ENCODE measurements at regions of chr1 and their contacts with region 1.

Region 1: DNA sequence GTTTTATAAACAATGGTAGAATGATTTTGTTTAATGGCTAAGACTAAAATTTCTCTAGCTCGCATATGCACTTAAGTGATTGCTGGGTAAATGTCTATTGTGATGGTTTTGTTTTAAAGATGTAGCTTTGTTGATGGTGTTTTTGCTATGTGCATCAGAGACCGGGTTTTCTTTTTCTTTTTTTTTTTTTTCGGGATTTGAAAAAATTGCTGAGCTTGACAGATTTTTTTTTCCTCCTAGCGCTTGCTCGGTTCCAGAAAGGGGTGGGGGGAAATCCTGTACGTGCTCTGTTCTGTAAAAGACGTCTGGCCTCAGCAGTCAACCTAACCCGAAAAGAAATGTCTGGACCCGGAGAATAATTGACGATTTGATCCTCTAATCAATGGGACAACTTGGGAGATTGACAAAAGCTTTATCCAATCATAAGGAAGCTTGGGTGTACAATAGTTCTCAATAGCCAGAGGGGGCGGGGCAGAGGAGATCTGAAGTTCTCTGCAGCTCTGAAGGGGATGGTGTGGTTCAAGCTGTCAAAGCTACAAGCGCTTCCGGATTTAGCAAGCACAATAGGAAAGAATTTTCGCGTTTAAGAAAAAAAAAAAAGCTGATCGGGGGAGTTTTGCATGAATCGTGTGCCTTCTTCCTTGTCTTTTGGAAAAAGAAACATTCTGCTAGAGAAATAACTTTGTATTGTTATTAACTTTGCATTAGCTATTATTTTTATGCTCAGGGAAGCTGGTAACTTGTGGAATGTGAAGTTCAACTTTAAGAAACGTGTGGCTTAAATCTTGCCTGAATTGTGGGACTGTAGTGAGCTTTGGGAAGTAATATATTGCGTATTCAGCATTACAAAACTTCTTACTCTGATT is 4.5 kb upstream of the NFIA start:
- DNase-seq: peak; percentile 100
- H3K4me3 Mint-ChIP-seq: peak overlapping the region; percentile 94
- H3K27ac Mint-ChIP-seq: peak overlapping the region; percentile 96
- H3K4me1 Mint-ChIP-seq: peaks cover 42% of the 10 kb centered on the region
- H3K27me3 Mint-ChIP-seq: no peaks in the 10 kb centered on the region
- CTCF ChIP-seq: no peak

Region 2: DNA sequence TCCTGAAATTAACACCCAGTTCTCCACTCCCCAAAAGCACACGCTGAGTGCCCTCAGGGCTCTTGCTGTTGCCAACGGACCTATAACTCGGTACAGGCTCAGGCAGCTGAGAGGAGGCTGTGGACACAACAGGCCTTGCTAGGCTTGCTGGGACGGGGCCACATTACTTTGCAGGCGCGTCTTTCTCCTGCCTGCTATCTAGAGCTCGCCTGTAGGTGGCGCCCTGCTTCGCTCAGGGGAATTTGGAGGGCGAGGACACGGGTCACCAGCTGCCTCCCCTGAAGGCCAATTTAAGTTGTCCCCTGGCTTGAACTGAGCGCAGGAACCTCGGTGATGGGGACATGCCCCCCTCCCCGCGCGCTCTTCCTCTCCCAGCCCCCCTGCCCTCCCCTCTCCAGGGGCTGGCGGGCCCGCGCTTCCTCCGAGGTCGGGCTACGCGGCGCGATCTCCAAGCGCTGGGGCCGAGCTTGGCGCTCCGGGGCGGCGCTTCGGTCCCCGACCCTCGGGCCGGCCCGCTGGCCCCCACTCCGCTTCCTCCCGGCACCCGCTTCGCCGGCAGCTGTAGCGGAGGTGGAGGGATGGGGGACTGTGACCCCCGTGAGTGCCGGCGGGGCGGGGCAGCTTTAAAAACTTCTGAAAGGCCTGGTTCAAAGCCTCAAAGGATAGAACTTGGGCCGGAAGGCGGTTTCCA is 27.9 kb before region 1 on chr1:
- CTCF ChIA-PET with region 1: interaction called, 77 read pairs
- POLR2A ChIA-PET with region 1: interaction called, 369 read pairs
- intact Hi-C with region 1: no loop called
- DNase-seq: peak; percentile 90
- H3K4me3 Mint-ChIP-seq: peak overlapping the region; percentile 76
- H3K27ac Mint-ChIP-seq: peak overlapping the region; percentile 19
- H3K4me1 Mint-ChIP-seq: peaks cover 20% of the 10 kb centered on the region
- H3K27me3 Mint-ChIP-seq: no peaks in the 10 kb centered on the region
- CTCF ChIP-seq: peak; percentile 93

Region 3: GRCh38 chr1:61097317-61097716 is 19.4 kb after region 1 on chr1:
- CTCF ChIA-PET with region 1: interaction called, 5 read pairs
- POLR2A ChIA-PET with region 1: interaction called, 61 read pairs
- intact Hi-C with region 1: no loop called
- DNase-seq: peak; percentile 55
- H3K4me3 Mint-ChIP-seq: no peak overlapping the region
- H3K27ac Mint-ChIP-seq: no peak overlapping the region
- H3K4me1 Mint-ChIP-seq: peaks cover 55% of the 10 kb centered on the region
- H3K27me3 Mint-ChIP-seq: no peaks in the 10 kb centered on the region
- CTCF ChIP-seq: no peak

Region 4: DNA sequence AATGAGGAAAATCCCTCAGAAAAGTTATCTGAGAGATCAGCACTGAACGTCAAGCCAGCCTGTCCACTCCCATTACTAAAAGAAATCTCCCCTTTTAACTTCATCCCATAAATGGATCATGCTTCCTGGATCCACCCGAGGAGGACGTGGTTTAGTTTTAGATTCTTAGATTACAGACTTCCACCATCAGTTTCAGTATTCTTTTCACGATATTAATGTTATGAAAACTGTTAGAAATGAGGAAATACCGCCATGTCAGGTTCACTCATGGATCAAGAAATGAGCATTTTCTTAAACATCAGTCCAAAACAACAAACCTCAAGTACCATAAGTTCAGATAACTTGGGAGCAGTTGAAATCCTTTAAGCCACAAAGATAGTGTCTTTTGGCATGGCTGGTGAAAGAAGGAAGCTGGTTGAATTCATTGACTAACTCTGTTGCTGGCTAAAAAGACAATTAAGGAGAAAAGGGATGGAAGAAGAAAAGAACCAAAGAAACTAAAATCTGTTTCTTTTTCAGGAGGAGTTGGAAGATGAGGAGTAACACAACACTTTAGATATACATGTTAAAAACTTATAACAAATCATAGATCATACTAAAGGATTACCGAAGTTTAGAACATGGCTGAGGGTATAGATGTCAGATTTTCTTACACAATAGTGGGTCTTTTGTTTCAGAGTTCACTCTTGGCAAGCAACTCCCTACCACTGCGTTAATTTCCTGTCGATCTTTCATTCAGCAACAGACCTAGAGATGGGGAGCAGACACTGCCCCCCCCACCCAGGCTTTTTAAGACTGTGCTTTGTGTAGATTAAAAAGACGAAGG is 54.5 kb after region 1 on chr1:
- CTCF ChIA-PET with region 1: no interaction called
- POLR2A ChIA-PET with region 1: interaction called, 6 read pairs
- intact Hi-C with region 1: loop called (anchors 2 kb)
- DNase-seq: peak; percentile 58
- H3K4me3 Mint-ChIP-seq: peak overlapping the region; percentile 38
- H3K27ac Mint-ChIP-seq: peak overlapping the region; percentile 61
- H3K4me1 Mint-ChIP-seq: peaks cover 19% of the 10 kb centered on the region
- H3K27me3 Mint-ChIP-seq: no peaks in the 10 kb centered on the region
- CTCF ChIP-seq: no peak

Region 5: GRCh38 chr1:61226784-61227567 is 149.1 kb after region 1 on chr1:
- CTCF ChIA-PET with region 1: no interaction called
- POLR2A ChIA-PET with region 1: interaction called, 20 read pairs
- intact Hi-C with region 1: loop called (anchors 10 kb)
- DNase-seq: peak; percentile 95
- H3K4me3 Mint-ChIP-seq: peak overlapping the region; percentile 56
- H3K27ac Mint-ChIP-seq: peak overlapping the region; percentile 49
- H3K4me1 Mint-ChIP-seq: peaks cover 29% of the 10 kb centered on the region
- H3K27me3 Mint-ChIP-seq: no peaks in the 10 kb centered on the region
- CTCF ChIP-seq: no peak

Region 6: DNA sequence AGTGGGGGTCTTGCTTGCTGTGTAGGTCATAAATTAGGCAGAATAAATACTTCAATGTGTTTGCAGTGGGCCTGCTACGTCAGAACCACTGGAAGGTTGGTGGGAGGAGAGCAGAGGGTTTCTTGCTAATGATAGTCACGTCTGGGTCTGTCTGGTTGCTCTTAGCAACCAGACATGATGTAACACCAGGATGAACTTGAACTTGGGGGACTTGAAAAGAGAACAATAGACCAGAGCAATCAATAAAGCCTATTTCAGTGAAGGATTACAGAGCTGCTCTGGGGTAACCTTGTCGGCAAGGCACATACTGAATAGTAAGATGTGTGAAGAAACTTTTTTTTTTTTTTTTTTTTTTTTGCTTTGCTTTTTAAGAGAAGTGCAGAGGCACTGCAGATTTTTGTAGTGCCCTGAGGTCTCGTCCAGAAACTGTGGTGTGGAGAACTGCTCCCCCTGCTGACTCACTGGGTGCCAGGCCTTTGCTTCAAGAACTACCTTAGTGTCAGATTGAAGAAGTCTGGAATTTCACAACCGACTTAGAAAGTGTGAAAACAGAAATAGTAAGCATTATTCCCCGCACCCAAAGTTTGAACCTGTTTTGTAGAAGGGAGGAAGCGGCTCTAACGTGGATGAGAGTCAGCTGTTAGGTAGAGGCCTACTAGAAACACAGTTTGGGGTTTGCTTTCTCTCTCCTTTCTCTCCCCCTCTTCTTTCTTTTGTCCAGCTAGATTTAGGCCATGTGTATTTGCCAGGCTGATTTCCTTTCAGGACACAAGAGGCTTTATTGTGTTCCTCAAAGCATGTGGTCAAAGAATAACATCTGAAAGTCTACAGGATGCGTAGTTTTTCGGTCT is 375.4 kb after region 1 on chr1:
- CTCF ChIA-PET with region 1: interaction called, 4 read pairs
- POLR2A ChIA-PET with region 1: interaction called, 11 read pairs
- intact Hi-C with region 1: loop called (anchors 2 kb)
- DNase-seq: peak; percentile 92
- H3K4me3 Mint-ChIP-seq: no peak overlapping the region
- H3K27ac Mint-ChIP-seq: peak overlapping the region; percentile 90
- H3K4me1 Mint-ChIP-seq: peaks cover 13% of the 10 kb centered on the region
- H3K27me3 Mint-ChIP-seq: no peaks in the 10 kb centered on the region
- CTCF ChIP-seq: peak; percentile 58

Measured in MCF 10A (cell line).